B cell (primary cell): ENCODE measurements at regions of chr4 and their contacts with region 1.

Region 1: GRCh38 chr4:75724066-75724866 is at the start of gene USO1:
- DNase-seq: peak; percentile 99
- ATAC-seq: peak; percentile 95
- H3K4me3 ChIP-seq: peak within 1 kb of the TSS; percentile 68 to 99 (median 90)
- H3K4me3 Mint-ChIP-seq: peak within 1 kb of the TSS; percentile 99
- H3K27ac ChIP-seq: peak within 1 kb of the TSS; percentile 90 to 91
- H3K27ac Mint-ChIP-seq: peak within 1 kb of the TSS; percentile 99
- H3K4me1 ChIP-seq: peaks cover 25 to 26% of the 10 kb centered on the region in 2 donors
- H3K4me1 Mint-ChIP-seq: peaks cover 56% of the 10 kb centered on the region
- H3K27me3 ChIP-seq: no peaks in the 10 kb centered on the region
- H3K27me3 Mint-ChIP-seq: no peaks in the 10 kb centered on the region
- CTCF ChIP-seq: peak; percentile 86
- total RNA-seq, gene USO1: 42.6 and 45.0 TPM in 2 replicates

Region 2: GRCh38 chr4:75514131-75514948 is 209.9 kb before region 1 on chr4 and contains the starts of genes RCHY1 and THAP6:
- CTCF ChIA-PET with region 1: interaction called, 10 read pairs
- POLR2A ChIA-PET with region 1: interaction called, 7 read pairs
- intact Hi-C with region 1: loop called (anchors 1 kb)
- DNase-seq: peak; percentile 96
- ATAC-seq: peak; percentile 87
- H3K4me3 ChIP-seq: peak within 1 kb of the TSS; percentile 76 to 94 (median 85)
- H3K4me3 Mint-ChIP-seq: no peak within 1 kb of the TSS
- H3K27ac ChIP-seq: peak within 1 kb of the TSS; percentile 93 to 96
- H3K27ac Mint-ChIP-seq: peak within 1 kb of the TSS; percentile 97
- H3K4me1 ChIP-seq: peaks cover 29 to 32% of the 10 kb centered on the region in 2 donors
- H3K4me1 Mint-ChIP-seq: peaks cover 36% of the 10 kb centered on the region
- H3K27me3 ChIP-seq: no peaks in the 10 kb centered on the region
- H3K27me3 Mint-ChIP-seq: no peaks in the 10 kb centered on the region
- CTCF ChIP-seq: peak; percentile 7
- total RNA-seq, gene RCHY1: 33.3 and 34.5 TPM in 2 replicates
- total RNA-seq, gene THAP6: 34.5 and 38.3 TPM in 2 replicates

Region 3: GRCh38 chr4:75644095-75644494 is 80.2 kb before region 1 on chr4:
- CTCF ChIA-PET with region 1: interaction called, 10 read pairs
- POLR2A ChIA-PET with region 1: no interaction called
- intact Hi-C with region 1: no loop called
- DNase-seq: no peak
- ATAC-seq: no peak
- H3K4me3 ChIP-seq: no peak overlapping the region
- H3K4me3 Mint-ChIP-seq: no peak overlapping the region
- H3K27ac ChIP-seq: peak overlapping the region in 1 of 2 donors; percentile 1
- H3K27ac Mint-ChIP-seq: peak overlapping the region; percentile 8
- H3K4me1 ChIP-seq: no peaks in the 10 kb centered on the region
- H3K4me1 Mint-ChIP-seq: no peaks in the 10 kb centered on the region
- H3K27me3 ChIP-seq: no peaks in the 10 kb centered on the region
- H3K27me3 Mint-ChIP-seq: no peaks in the 10 kb centered on the region
- CTCF ChIP-seq: no peak

Region 4: GRCh38 chr4:75673027-75673958 is 51.0 kb before region 1 on chr4 and contains the start of gene G3BP2:
- CTCF ChIA-PET with region 1: interaction called, 25 read pairs
- POLR2A ChIA-PET with region 1: interaction called, 27 read pairs
- intact Hi-C with region 1: loop called (anchors 1 kb)
- DNase-seq: peak; percentile 99
- ATAC-seq: peak; percentile 92
- H3K4me3 ChIP-seq: peak within 1 kb of the TSS; percentile 90 to 100 (median 96)
- H3K4me3 Mint-ChIP-seq: peak within 1 kb of the TSS; percentile 99
- H3K27ac ChIP-seq: peak within 1 kb of the TSS; percentile 95 to 99
- H3K27ac Mint-ChIP-seq: peak within 1 kb of the TSS; percentile 99
- H3K4me1 ChIP-seq: peaks cover 34 to 37% of the 10 kb centered on the region in 2 donors
- H3K4me1 Mint-ChIP-seq: peaks cover 44% of the 10 kb centered on the region
- H3K27me3 ChIP-seq: no peaks in the 10 kb centered on the region
- H3K27me3 Mint-ChIP-seq: no peaks in the 10 kb centered on the region
- CTCF ChIP-seq: no peak
- total RNA-seq, gene G3BP2: 154 and 155 TPM in 2 replicates

Region 5: GRCh38 chr4:75708218-75708691 is 16.0 kb before region 1 on chr4:
- CTCF ChIA-PET with region 1: interaction called, 37 read pairs
- POLR2A ChIA-PET with region 1: interaction called, 8 read pairs
- intact Hi-C with region 1: no loop called
- DNase-seq: peak; percentile 65
- ATAC-seq: peak; percentile 82
- H3K4me3 ChIP-seq: no peak overlapping the region
- H3K4me3 Mint-ChIP-seq: peak overlapping the region; percentile 19
- H3K27ac ChIP-seq: no peak overlapping the region
- H3K27ac Mint-ChIP-seq: peak overlapping the region; percentile 43
- H3K4me1 ChIP-seq: peaks cover 7 to 10% of the 10 kb centered on the region in 2 donors
- H3K4me1 Mint-ChIP-seq: peaks cover 14% of the 10 kb centered on the region
- H3K27me3 ChIP-seq: no peaks in the 10 kb centered on the region
- H3K27me3 Mint-ChIP-seq: no peaks in the 10 kb centered on the region
- CTCF ChIP-seq: peak; percentile 72

Region 6: DNA sequence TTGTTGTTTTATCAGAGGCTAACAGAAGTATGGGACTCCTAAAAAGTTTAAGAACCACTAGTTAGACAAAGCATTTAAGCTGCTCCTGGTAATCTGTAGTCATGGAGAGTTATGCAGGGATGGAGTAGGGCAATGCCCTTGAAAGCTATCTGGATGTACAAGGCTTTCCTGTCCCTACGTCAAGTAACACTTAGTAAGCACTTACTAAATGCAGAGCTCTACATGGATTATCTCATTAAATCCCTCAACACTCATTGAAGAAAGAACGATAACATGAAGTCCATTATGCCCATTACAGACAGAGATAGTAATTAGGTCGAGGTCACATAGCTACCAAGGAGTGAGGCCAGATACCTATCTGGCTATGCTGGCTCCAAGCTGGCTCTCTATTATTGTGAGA is 144.8 kb after region 1 on chr4:
- CTCF ChIA-PET with region 1: no interaction called
- POLR2A ChIA-PET with region 1: no interaction called
- intact Hi-C with region 1: no loop called
- DNase-seq: no peak
- ATAC-seq: no peak
- H3K4me3 ChIP-seq: no peak overlapping the region
- H3K4me3 Mint-ChIP-seq: no peak overlapping the region
- H3K27ac ChIP-seq: no peak overlapping the region
- H3K27ac Mint-ChIP-seq: no peak overlapping the region
- H3K4me1 ChIP-seq: no peaks in the 10 kb centered on the region
- H3K4me1 Mint-ChIP-seq: no peaks in the 10 kb centered on the region
- H3K27me3 ChIP-seq: no peaks in the 10 kb centered on the region
- H3K27me3 Mint-ChIP-seq: peaks cover 9% of the 10 kb centered on the region
- CTCF ChIP-seq: no peak